ENCODE measurements at regions of chr2 and their contacts with region 1.

Region 1: GRCh38 chr2:107020392-107020791 is 134.4 kb upstream of the ST6GAL2 start:
- DNase-seq: no peak
- H3K4me3 ChIP-seq: no peak overlapping the region
- H3K27ac ChIP-seq: no peak overlapping the region
- H3K4me1 ChIP-seq: no peaks in the 10 kb centered on the region
- H3K27me3 ChIP-seq: no peaks in the 10 kb centered on the region
- CTCF ChIP-seq: no peak
- POLR2A ChIP-seq: no peak

Region 2: DNA sequence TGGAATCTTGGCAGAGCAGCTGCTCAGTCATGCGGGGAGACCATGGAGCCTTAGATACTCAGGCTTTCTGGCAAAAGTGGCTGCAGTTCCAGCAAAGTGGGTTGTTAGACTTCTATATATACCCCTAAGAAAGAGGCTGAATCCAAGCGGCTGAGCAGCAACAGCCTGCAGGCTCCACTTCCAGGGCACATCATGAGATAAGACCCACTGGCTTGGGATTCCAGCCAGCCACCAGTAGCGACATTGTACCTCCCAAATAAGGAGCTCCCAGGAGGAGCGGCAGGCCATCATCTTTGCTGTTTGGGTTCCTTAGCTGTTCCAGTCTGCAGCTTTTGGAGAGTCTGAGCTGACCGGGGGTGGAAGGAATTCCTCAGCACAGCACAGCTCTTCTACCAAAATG is 15.9 kb after region 1 on chr2:
- intact Hi-C with region 1: no loop called
- DNase-seq: no peak
- H3K4me3 ChIP-seq: no peak overlapping the region
- H3K27ac ChIP-seq: no peak overlapping the region
- H3K4me1 ChIP-seq: no peaks in the 10 kb centered on the region
- H3K27me3 ChIP-seq: no peaks in the 10 kb centered on the region
- CTCF ChIP-seq: no peak
- POLR2A ChIP-seq: no peak

Region 3: DNA sequence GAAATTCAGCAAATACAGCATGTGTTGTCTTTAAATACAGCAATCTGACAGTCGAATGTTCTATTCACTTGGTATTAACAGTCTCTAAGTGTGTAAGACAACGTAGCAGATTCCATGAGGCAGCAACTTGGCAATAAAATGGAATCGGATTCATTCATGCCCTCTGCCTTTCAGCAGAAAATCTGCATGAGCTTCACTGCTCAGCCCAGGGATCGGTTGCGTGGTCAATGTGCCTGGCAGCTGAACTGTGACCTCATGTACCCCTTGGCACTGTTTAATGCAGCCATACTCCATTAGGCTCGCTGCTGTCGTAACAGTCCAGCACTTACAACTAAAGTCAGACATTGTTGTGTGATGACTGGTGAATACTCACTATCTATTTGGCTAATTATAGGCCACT is 788.6 kb after region 1 on chr2:
- intact Hi-C with region 1: loop called (anchors 5 kb)
- DNase-seq: no peak
- H3K4me3 ChIP-seq: no peak overlapping the region
- H3K27ac ChIP-seq: no peak overlapping the region
- H3K4me1 ChIP-seq: peaks cover 10% of the 10 kb centered on the region
- H3K27me3 ChIP-seq: no peaks in the 10 kb centered on the region
- CTCF ChIP-seq: no peak
- POLR2A ChIP-seq: no peak

Region 4: DNA sequence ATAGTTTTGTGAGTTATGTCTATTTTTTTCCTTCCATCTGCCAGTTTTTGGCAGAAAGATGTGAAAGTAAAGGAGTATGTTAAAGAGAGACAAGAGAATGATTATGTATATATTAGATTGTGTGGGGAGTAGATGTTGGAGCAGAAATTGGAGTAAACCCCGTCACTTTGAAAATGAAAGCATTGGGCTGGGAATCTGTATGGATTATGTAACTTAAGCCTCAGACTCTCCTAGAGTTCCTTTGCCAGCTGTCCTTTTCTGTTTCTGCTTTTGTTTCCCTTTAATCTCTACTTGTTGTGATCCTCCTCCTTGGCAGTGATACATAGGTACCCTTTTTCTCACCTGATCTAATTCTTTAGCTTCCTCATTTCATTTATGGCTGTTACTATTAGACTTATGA is 1785.4 kb after region 1 on chr2:
- intact Hi-C with region 1: no loop called
- DNase-seq: no peak
- H3K4me3 ChIP-seq: no peak overlapping the region
- H3K27ac ChIP-seq: no peak overlapping the region
- H3K4me1 ChIP-seq: no peaks in the 10 kb centered on the region
- H3K27me3 ChIP-seq: no peaks in the 10 kb centered on the region
- CTCF ChIP-seq: no peak
- POLR2A ChIP-seq: no peak

Measured in vagina (tissue), 2 donors.